ENCODE measurements at regions of chr13 and their contacts with region 1.

Region 1: GRCh38 chr13:100573121-100573520 is 15.5 kb downstream of the GGACT start:
- DNase-seq: peak; percentile 58 to 84 (median 61)
- ATAC-seq: peak; percentile 98
- H3K4me3 ChIP-seq: no peak overlapping the region
- H3K27ac ChIP-seq: no peak overlapping the region
- H3K4me1 ChIP-seq: no peaks in the 10 kb centered on the region
- H3K27me3 ChIP-seq: no peaks in the 10 kb centered on the region
- CTCF ChIP-seq: peak; percentile 60 to 76 (median 63)
- EP300 ChIP-seq: no peak
- POLR2A ChIP-seq: no peak
- RAD21 ChIP-seq: peak; percentile 65 to 87

Region 2: DNA sequence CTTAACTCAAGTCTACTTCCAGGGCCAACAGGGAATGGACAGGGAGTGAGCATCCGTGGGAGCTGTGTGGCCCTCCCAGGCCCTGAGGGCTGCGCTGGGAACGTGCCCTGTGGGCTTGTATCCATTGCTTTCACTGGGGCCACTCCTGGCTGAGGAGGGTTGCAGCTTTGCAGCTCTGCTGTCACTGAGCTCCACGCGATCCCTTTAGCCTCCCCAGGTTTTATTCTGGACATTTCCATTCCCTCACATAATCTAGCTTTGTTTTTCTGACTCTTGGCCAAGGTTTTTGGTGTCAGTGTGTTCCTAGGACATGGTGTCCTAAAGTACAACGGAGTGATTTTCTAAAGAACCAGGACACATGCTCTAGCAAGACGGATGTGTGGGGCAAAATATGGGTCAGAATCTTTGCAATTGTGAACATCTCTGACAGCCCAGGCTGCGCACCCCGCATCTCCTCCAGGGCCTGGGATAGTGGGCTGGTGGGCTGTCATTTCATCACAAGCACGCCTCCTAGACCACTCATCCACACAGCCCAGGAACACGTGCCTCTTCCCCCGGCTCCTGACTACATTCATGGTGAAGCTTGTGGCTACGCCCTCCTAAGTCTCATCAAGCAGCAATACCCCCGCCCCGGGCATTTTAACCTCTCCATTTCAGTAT is 12.5 kb before region 1 on chr13:
- CTCF ChIA-PET with region 1: no interaction called
- POLR2A ChIA-PET with region 1: no interaction called
- in situ Hi-C with region 1: no loop called
- intact Hi-C with region 1: no loop called
- DNase-seq: no peak
- ATAC-seq: peak; percentile 42; the same call in 2 of the 3 replicates
- H3K4me3 ChIP-seq: no peak overlapping the region
- H3K27ac ChIP-seq: no peak overlapping the region
- H3K4me1 ChIP-seq: no peaks in the 10 kb centered on the region
- H3K27me3 ChIP-seq: peaks cover 3 to 29% of the 10 kb centered on the region in 2 experiments; a peak in 3 of 5 replicates
- CTCF ChIP-seq: no peak
- EP300 ChIP-seq: no peak
- POLR2A ChIP-seq: no peak
- RAD21 ChIP-seq: no peak

Region 3: GRCh38 chr13:100636441-100636840 is 63.3 kb after region 1 on chr13:
- CTCF ChIA-PET with region 1: interaction called, 5 read pairs
- POLR2A ChIA-PET with region 1: no interaction called
- in situ Hi-C with region 1: no loop called
- intact Hi-C with region 1: loop called (anchors 5 kb)
- DNase-seq: no peak
- ATAC-seq: no peak
- H3K4me3 ChIP-seq: no peak overlapping the region
- H3K27ac ChIP-seq: no peak overlapping the region
- H3K4me1 ChIP-seq: no peaks in the 10 kb centered on the region
- H3K27me3 ChIP-seq: no peaks in the 10 kb centered on the region
- CTCF ChIP-seq: no peak
- EP300 ChIP-seq: no peak
- POLR2A ChIP-seq: no peak
- RAD21 ChIP-seq: no peak

Region 4: GRCh38 chr13:100674848-100675660 is 101.9 kb after region 1 on chr13:
- CTCF ChIA-PET with region 1: no interaction called
- POLR2A ChIA-PET with region 1: no interaction called
- in situ Hi-C with region 1: no loop called
- intact Hi-C with region 1: loop called (anchors 2 kb)
- DNase-seq: peak; percentile 96 to 99 (median 98)
- ATAC-seq: peak; percentile 96
- H3K4me3 ChIP-seq: peak overlapping the region; percentile 75
- H3K27ac ChIP-seq: peak overlapping the region; percentile 68
- H3K4me1 ChIP-seq: peaks cover 9 to 12% of the 10 kb centered on the region in 2 experiments; a peak in 4 of 5 replicates
- H3K27me3 ChIP-seq: peaks cover 0 to 5% of the 10 kb centered on the region in 2 experiments; a peak in 3 of 5 replicates
- CTCF ChIP-seq: peak in 2 of 3 experiments; percentile 39 to 55; a peak in 4 of 6 replicates
- EP300 ChIP-seq: no peak
- POLR2A ChIP-seq: peak; percentile 69
- RAD21 ChIP-seq: no peak

Region 5: DNA sequence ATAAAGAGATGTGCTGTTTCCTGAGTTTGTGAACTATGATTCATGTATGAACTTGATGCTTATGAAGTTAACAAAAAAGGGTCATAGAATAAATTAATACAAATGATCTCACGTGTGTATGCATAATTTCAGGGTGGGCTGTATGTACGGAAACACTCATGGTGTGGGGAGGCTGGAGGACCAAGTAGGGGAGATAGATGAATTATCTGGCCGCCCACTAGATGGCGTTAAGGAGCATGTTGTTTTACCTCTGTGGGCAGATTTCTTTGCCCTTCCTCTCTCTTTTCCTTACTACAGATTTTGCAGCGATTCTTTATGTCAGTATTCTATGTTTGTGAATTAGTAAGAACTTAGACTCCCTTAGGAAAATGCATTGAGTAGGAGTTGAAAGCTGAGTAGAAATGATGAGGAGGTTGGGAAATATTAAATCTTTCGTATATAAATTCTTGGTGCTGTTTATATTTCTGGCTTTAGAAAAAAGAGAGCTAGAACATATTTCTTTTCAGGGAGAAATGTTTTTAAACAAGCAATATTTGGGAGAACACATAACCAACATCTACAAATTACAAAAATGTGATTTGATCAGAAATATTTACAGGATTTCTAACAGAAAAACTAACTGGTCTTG is 148.9 kb after region 1 on chr13:
- CTCF ChIA-PET with region 1: no interaction called
- POLR2A ChIA-PET with region 1: no interaction called
- in situ Hi-C with region 1: no loop called
- intact Hi-C with region 1: no loop called
- DNase-seq: peak; percentile 40 to 54 (median 41)
- ATAC-seq: peak; percentile 85
- H3K4me3 ChIP-seq: no peak overlapping the region
- H3K27ac ChIP-seq: no peak overlapping the region
- H3K4me1 ChIP-seq: no peaks in the 10 kb centered on the region
- H3K27me3 ChIP-seq: no peaks in the 10 kb centered on the region
- CTCF ChIP-seq: peak; percentile 56 to 63 (median 62)
- EP300 ChIP-seq: no peak
- POLR2A ChIP-seq: no peak
- RAD21 ChIP-seq: peak in 1 of 2 experiments; percentile 38; a peak in 2 of 4 replicates

Region 6: DNA sequence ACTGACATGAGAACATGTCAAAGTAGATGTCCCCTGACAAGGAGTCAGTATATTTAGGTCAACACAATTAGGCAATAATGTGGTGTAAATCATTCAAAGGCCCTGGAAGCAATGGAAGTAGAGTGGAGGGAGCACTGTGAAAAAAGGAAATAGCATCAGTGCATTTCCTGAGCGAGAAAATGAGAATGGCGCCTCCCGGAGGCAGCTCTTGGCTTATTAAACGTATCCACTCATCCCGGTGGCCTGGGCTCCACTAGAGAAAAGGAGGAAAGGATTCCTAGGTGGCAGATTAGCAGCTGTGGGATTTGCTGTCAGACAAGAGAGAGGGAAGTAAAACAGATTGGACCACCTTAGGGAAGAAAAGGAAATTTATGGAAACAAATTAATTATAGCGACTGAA is 275.2 kb after region 1 on chr13:
- CTCF ChIA-PET with region 1: no interaction called
- POLR2A ChIA-PET with region 1: no interaction called
- in situ Hi-C with region 1: no loop called
- intact Hi-C with region 1: loop called (anchors 10 kb)
- DNase-seq: peak in 1 of 4 experiments; percentile 4
- ATAC-seq: no peak
- H3K4me3 ChIP-seq: no peak overlapping the region
- H3K27ac ChIP-seq: no peak overlapping the region
- H3K4me1 ChIP-seq: no peaks in the 10 kb centered on the region
- H3K27me3 ChIP-seq: no peaks in the 10 kb centered on the region
- CTCF ChIP-seq: peak in 1 of 3 experiments; percentile 10; a peak in 1 of 6 replicates
- EP300 ChIP-seq: no peak
- POLR2A ChIP-seq: no peak
- RAD21 ChIP-seq: no peak

Region 7: GRCh38 chr13:100933841-100934240 is 360.7 kb after region 1 on chr13:
- CTCF ChIA-PET with region 1: no interaction called
- POLR2A ChIA-PET with region 1: no interaction called
- in situ Hi-C with region 1: no loop called
- intact Hi-C with region 1: loop called (anchors 10 kb)
- DNase-seq: no peak
- ATAC-seq: no peak
- H3K4me3 ChIP-seq: no peak overlapping the region
- H3K27ac ChIP-seq: no peak overlapping the region
- H3K4me1 ChIP-seq: no peaks in the 10 kb centered on the region
- H3K27me3 ChIP-seq: 0 out of 5 replicates have a peak, but pooled peaks cover 0 to 4% of the 10 kb centered on the region in 2 experiments
- CTCF ChIP-seq: no peak
- EP300 ChIP-seq: no peak
- POLR2A ChIP-seq: no peak
- RAD21 ChIP-seq: no peak

Region 8: GRCh38 chr13:101115762-101116171 is 542.6 kb after region 1 on chr13:
- CTCF ChIA-PET with region 1: no interaction called
- POLR2A ChIA-PET with region 1: no interaction called
- in situ Hi-C with region 1: loop called (anchors 25 kb)
- intact Hi-C with region 1: no loop called
- DNase-seq: no peak
- ATAC-seq: no peak
- H3K4me3 ChIP-seq: no peak overlapping the region
- H3K27ac ChIP-seq: no peak overlapping the region
- H3K4me1 ChIP-seq: no peaks in the 10 kb centered on the region
- H3K27me3 ChIP-seq: no peaks in the 10 kb centered on the region
- CTCF ChIP-seq: no peak
- EP300 ChIP-seq: no peak
- POLR2A ChIP-seq: no peak
- RAD21 ChIP-seq: no peak

Region 9: GRCh38 chr13:101127741-101128353 is 554.7 kb after region 1 on chr13:
- CTCF ChIA-PET with region 1: interaction called, 4 read pairs
- POLR2A ChIA-PET with region 1: no interaction called
- in situ Hi-C with region 1: loop called (anchors 25 kb)
- intact Hi-C with region 1: loop called (anchors 2 kb)
- DNase-seq: peak; percentile 14 to 37 (median 24)
- ATAC-seq: peak; percentile 79
- H3K4me3 ChIP-seq: no peak overlapping the region
- H3K27ac ChIP-seq: no peak overlapping the region
- H3K4me1 ChIP-seq: no peaks in the 10 kb centered on the region
- H3K27me3 ChIP-seq: no peaks in the 10 kb centered on the region
- CTCF ChIP-seq: peak; percentile 21 to 61 (median 46); a peak in 4 of 6 replicates
- EP300 ChIP-seq: no peak
- POLR2A ChIP-seq: no peak
- RAD21 ChIP-seq: peak; percentile 44 to 63; a peak in 3 of 4 replicates